Naive thymus-derived CD8-positive, alpha-beta T cell (primary cell): ENCODE measurements at regions of chr17 and their contacts with region 1.

Region 1: GRCh38 chr17:2814481-2815341 is 18.5 kb downstream of the RAP1GAP2 start:
- DNase-seq: peak; percentile 73 to 100 (median 96)
- ATAC-seq: peak; percentile 84 to 88
- H3K4me3 Mint-ChIP-seq: peak overlapping the region; percentile 56 to 86 (median 74)
- H3K27ac Mint-ChIP-seq: peak overlapping the region; percentile 4 to 96 (median 92)
- H3K4me1 Mint-ChIP-seq: peaks cover 8 to 55% (median 28%) of the 10 kb centered on the region in 4 donors
- H3K27me3 Mint-ChIP-seq: no peaks in the 10 kb centered on the region

Region 2: GRCh38 chr17:2786176-2786881 is 28.4 kb before region 1 on chr17:
- POLR2A ChIA-PET with region 1: interaction called, 18 read pairs
- DNase-seq: peak; percentile 80 to 95 (median 87)
- ATAC-seq: peak; percentile 97 to 98
- H3K4me3 Mint-ChIP-seq: peak overlapping the region in 5 of 10 donors; percentile 26 to 49 (median 33)
- H3K27ac Mint-ChIP-seq: no peak overlapping the region
- H3K4me1 Mint-ChIP-seq: peaks cover under 1 to 32% (median 9%) of the 10 kb centered on the region in 4 donors
- H3K27me3 Mint-ChIP-seq: peaks cover 0 to 4% (median 1%) of the 10 kb centered on the region in 5 donors

Region 3: DNA sequence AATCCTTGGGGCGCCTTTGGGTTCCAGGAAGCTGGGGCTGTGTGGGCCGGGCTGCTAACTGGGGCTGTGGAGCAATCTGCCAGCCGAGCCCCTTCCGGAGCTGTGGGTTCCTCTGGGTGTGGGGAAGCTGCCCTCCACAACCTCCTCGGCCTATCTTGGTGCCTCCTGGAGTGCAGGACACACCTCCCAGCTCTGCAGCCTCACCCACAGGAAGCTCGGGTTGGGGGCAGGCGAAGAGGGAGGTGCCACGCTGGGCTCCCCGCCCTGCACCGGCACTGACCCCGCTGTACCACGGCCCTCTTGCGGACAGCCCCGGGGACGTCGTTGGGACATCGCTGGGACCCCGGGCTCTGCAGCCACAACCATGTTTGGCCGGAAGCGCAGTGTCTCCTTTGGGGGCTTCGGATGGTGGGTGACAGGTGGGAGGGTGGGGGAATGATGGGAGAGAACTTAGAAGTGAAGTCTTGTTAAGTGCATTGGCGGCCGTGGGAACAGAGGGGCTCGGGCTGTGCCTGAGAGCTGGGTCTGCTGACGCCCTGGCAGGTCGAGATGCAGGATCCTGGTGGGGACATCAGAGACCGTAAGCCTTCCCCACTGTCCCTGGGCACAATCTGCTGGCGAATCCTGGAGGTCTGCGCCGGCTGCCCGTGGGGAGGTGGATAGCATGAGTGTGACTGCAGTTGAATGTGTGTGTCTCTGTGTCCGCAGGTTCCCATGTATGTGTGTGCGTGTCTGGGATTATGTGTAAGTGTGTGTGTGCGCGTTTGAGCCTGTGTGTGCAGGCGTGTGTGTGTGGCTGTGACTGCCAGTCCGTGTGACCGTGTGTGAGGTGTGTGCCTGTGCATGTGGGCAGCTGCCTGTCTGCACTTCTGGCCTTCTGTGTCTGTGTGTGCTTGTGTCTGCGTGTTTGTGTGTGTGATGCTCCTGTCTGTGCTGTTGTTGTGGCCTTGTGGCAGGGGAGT is 18.3 kb before region 1 on chr17 and contains the start of gene RAP1GAP2:
- POLR2A ChIA-PET with region 1: interaction called, 40 read pairs
- DNase-seq: peak; percentile 32 to 84 (median 62)
- ATAC-seq: peak; percentile 83 to 91
- H3K4me3 Mint-ChIP-seq: peak within 1 kb of the TSS; percentile 70 to 96 (median 87)
- H3K27ac Mint-ChIP-seq: peak within 1 kb of the TSS; percentile 36 to 88 (median 78)
- H3K4me1 Mint-ChIP-seq: peaks cover 44 to 84% (median 78%) of the 10 kb centered on the region in 4 donors
- H3K27me3 Mint-ChIP-seq: peaks cover 0 to 3% (median under 1%) of the 10 kb centered on the region in 5 donors
- polyA plus RNA-seq, gene RAP1GAP2: 0.78 to 1.6 (median 1.4) TPM

Region 4: DNA sequence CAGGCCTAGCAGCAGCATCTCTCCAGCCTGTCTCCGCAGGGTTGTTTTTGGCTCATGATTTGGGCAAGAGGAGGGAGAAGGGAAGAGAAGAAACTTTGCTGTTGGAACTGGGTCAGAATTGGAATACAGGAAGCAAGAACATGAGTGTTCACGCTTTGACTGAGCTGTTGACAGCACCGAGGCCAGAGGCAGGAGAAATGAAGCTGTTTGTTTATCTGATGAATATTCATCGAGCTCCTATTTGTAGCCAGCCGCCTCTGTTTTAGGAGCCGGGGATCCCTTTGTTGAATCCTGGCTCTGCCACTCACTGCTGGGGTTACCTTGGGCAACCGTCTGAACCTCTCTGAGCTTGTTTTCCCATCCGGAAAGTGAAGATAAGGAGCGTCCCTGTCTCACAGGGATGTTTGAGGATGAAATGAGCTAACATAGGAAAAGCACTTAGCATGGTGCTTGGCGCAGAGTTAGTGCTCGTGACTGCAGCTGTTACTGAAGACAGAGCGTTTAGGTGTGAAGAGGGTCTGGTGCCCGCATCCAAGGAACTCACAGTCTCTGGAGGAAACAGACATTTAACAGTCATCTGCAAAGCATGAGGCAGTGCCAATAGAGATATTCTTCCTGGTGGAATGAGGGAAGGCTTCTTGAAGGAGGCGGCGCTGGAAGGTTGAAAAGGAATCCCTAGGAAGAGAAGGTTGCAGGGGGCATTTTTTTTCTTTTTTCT is 10.7 kb after region 1 on chr17:
- POLR2A ChIA-PET with region 1: interaction called, 15 read pairs
- DNase-seq: no peak
- ATAC-seq: no peak
- H3K4me3 Mint-ChIP-seq: no peak overlapping the region
- H3K27ac Mint-ChIP-seq: no peak overlapping the region
- H3K4me1 Mint-ChIP-seq: peaks cover 19 to 56% (median 33%) of the 10 kb centered on the region in 4 donors
- H3K27me3 Mint-ChIP-seq: peaks cover 2 to 32% (median 17%) of the 10 kb centered on the region in 5 donors

Region 5: GRCh38 chr17:2837147-2837561 is 22.4 kb after region 1 on chr17:
- POLR2A ChIA-PET with region 1: interaction called, 10 read pairs
- DNase-seq: peak; percentile 21 to 76 (median 49)
- ATAC-seq: peak; percentile 99 to 100
- H3K4me3 Mint-ChIP-seq: no peak overlapping the region
- H3K27ac Mint-ChIP-seq: peak overlapping the region in 1 of 10 donors; percentile 16
- H3K4me1 Mint-ChIP-seq: peaks cover 3 to 17% (median 7%) of the 10 kb centered on the region in 4 donors
- H3K27me3 Mint-ChIP-seq: peaks cover 0 to 2% (median 0%) of the 10 kb centered on the region in 5 donors

Region 6: DNA sequence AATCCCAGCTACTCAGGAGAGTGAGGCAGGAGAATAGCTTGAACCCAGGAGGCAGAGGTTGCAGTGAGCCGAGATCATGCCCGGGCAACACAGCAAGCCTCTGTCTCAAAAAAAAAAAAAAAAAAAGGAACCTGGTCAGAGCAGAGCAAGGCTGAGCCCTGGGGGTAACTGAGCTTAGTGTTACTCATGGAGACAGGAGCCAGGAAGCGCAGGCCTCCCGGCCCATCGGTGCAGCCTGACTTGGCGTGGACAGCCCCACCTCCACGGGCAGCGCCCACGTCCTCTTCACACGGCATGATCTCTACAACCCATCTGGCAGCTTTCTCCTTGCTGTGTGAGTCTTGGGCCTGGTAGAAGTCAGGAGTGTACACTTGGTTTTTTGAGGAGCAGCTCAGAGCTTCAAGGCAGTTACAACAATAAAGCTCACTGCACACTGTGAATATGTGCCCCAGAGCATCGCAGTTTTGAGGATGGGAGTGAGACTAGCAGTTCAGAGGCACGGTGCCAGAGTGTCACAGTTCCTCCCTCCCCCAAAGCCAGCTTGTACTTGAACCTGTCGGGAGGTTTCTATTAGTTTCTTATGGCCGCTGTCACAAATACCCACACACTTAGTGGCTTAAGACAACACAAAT is 111.4 kb after region 1 on chr17:
- POLR2A ChIA-PET with region 1: no interaction called
- DNase-seq: no peak
- ATAC-seq: no peak
- H3K4me3 Mint-ChIP-seq: no peak overlapping the region
- H3K27ac Mint-ChIP-seq: no peak overlapping the region
- H3K4me1 Mint-ChIP-seq: peaks cover 7 to 27% (median 12%) of the 10 kb centered on the region in 4 donors
- H3K27me3 Mint-ChIP-seq: peaks cover 0 to 2% (median 0%) of the 10 kb centered on the region in 5 donors